ENCODE measurements at regions of chr11 and their contacts with region 1.

Region 1: GRCh38 chr11:83724008-83724461 is 437.9 kb upstream of the CCDC90B start:
- DNase-seq: peak; percentile 49
- H3K4me3 Mint-ChIP-seq: peak overlapping the region; percentile 45
- H3K27ac Mint-ChIP-seq: no peak overlapping the region
- H3K4me1 Mint-ChIP-seq: peaks cover 8% of the 10 kb centered on the region
- H3K27me3 Mint-ChIP-seq: peaks cover 9% of the 10 kb centered on the region

Region 2: GRCh38 chr11:82682003-82682751 is 1041.9 kb before region 1 on chr11:
- CTCF ChIA-PET with region 1: interaction called, 3 read pairs
- intact Hi-C with region 1: loop called (anchors 10 kb)
- DNase-seq: no peak
- H3K4me3 Mint-ChIP-seq: no peak overlapping the region
- H3K27ac Mint-ChIP-seq: no peak overlapping the region
- H3K4me1 Mint-ChIP-seq: no peaks in the 10 kb centered on the region
- H3K27me3 Mint-ChIP-seq: peaks cover 2% of the 10 kb centered on the region

Region 3: GRCh38 chr11:82873919-82874333 is 850.1 kb before region 1 on chr11:
- CTCF ChIA-PET with region 1: no interaction called
- intact Hi-C with region 1: loop called (anchors 1 kb)
- DNase-seq: no peak
- H3K4me3 Mint-ChIP-seq: no peak overlapping the region
- H3K27ac Mint-ChIP-seq: peak overlapping the region; percentile 59
- H3K4me1 Mint-ChIP-seq: peaks cover 30% of the 10 kb centered on the region
- H3K27me3 Mint-ChIP-seq: no peaks in the 10 kb centered on the region

Region 4: GRCh38 chr11:83102834-83103233 is 621.2 kb before region 1 on chr11:
- CTCF ChIA-PET with region 1: no interaction called
- intact Hi-C with region 1: loop called (anchors 10 kb)
- DNase-seq: no peak
- H3K4me3 Mint-ChIP-seq: no peak overlapping the region
- H3K27ac Mint-ChIP-seq: no peak overlapping the region
- H3K4me1 Mint-ChIP-seq: no peaks in the 10 kb centered on the region
- H3K27me3 Mint-ChIP-seq: no peaks in the 10 kb centered on the region

Region 5: DNA sequence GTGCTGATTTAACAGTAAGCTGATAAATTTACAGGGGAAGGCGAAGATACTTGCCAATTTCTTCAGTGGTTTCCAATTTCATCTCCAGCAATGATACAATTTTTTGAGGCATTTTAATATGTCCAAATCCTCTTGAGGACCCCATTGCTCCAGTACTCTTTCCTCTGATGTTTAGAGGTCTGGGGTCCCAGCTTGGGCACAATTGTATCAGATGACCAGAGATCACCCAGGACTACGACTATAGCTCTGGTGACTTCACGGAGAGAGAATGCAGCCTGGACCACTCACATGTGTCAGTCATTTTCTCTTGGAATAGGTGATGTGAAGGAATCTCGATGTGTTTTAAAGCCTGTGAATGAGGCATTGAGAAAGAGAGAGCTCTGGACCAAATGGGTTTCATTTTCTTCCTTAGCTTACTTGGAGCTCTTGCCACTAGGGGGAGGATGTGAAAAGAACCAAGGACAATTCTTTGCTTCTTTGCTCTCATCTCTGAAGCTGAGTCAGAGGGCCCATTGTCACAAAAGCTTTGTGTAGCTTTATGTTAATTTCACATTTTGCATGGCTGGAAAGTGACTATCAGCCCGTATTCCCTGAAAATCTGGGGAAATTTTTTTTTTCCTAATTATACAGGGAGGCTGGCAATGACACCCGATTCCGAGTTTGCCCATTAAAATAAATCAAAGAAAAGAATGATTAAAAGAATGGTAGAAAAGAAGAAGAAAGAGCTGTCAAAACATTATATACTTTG is 431.2 kb before region 1 on chr11:
- CTCF ChIA-PET with region 1: interaction called, 11 read pairs
- intact Hi-C with region 1: loop called (anchors 1 kb)
- DNase-seq: peak; percentile 57
- H3K4me3 Mint-ChIP-seq: peak overlapping the region; percentile 58
- H3K27ac Mint-ChIP-seq: no peak overlapping the region
- H3K4me1 Mint-ChIP-seq: peaks cover 11% of the 10 kb centered on the region
- H3K27me3 Mint-ChIP-seq: peaks cover 2% of the 10 kb centered on the region

Region 6: GRCh38 chr11:83336993-83337392 is 387.0 kb before region 1 on chr11:
- CTCF ChIA-PET with region 1: no interaction called
- intact Hi-C with region 1: no loop called
- DNase-seq: no peak
- H3K4me3 Mint-ChIP-seq: no peak overlapping the region
- H3K27ac Mint-ChIP-seq: no peak overlapping the region
- H3K4me1 Mint-ChIP-seq: peaks cover 2% of the 10 kb centered on the region
- H3K27me3 Mint-ChIP-seq: peaks cover 3% of the 10 kb centered on the region

Region 7: GRCh38 chr11:83528877-83529276 is 195.2 kb before region 1 on chr11:
- CTCF ChIA-PET with region 1: no interaction called
- intact Hi-C with region 1: no loop called
- DNase-seq: no peak
- H3K4me3 Mint-ChIP-seq: no peak overlapping the region
- H3K27ac Mint-ChIP-seq: no peak overlapping the region
- H3K4me1 Mint-ChIP-seq: no peaks in the 10 kb centered on the region
- H3K27me3 Mint-ChIP-seq: no peaks in the 10 kb centered on the region

Region 8: GRCh38 chr11:83612891-83613766 is 110.9 kb before region 1 on chr11:
- CTCF ChIA-PET with region 1: no interaction called
- intact Hi-C with region 1: no loop called
- DNase-seq: no peak
- H3K4me3 Mint-ChIP-seq: no peak overlapping the region
- H3K27ac Mint-ChIP-seq: no peak overlapping the region
- H3K4me1 Mint-ChIP-seq: no peaks in the 10 kb centered on the region
- H3K27me3 Mint-ChIP-seq: no peaks in the 10 kb centered on the region

Region 9: DNA sequence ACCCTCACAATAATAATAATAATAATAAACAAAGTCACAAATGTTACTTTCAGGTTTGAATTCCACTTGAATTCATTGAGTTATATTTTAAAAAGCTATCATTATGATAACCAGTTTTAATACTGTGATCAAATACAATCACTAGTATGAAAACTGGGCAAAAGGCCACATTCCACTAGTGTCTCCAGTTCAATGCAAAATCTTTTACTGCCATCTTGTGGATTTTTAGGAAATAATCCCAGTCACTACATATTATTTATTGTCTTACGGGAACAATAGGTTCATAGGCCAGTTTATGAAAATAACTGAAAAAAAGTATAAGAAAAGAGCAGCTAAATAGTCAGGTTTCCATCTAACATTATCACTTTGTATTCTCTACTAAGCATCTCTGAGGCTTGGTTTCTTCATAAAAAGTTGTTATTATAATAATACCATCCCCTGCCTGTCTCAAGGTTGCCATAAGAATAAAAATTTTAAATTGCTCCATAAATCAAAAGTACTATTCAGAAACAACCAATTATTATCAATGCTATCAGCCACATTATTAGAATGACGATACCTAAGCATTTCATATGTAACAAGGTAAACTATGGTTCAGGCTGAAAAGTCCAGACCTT is 96.0 kb after region 1 on chr11:
- CTCF ChIA-PET with region 1: interaction called, 4 read pairs
- intact Hi-C with region 1: loop called (anchors 1 kb)
- DNase-seq: no peak
- H3K4me3 Mint-ChIP-seq: no peak overlapping the region
- H3K27ac Mint-ChIP-seq: no peak overlapping the region
- H3K4me1 Mint-ChIP-seq: no peaks in the 10 kb centered on the region
- H3K27me3 Mint-ChIP-seq: no peaks in the 10 kb centered on the region

Measured in activated naive CD4-positive, alpha-beta T cell treated with anti-CD3 and anti-CD28 coated beads for 36 hours (primary cell).